Testis (tissue), 5 donors: ENCODE measurements at regions of chr3 and their contacts with region 1.

Region 1: GRCh38 chr3:13091898-13092611 is 18.8 kb upstream of the IQSEC1 start:
- DNase-seq: peak; percentile 97
- H3K4me3 ChIP-seq: no peak overlapping the region
- H3K27ac ChIP-seq: peak overlapping the region; percentile 32 to 68
- H3K4me1 ChIP-seq: peaks cover 38% of the 10 kb centered on the region
- H3K27me3 ChIP-seq: no peaks in the 10 kb centered on the region
- CTCF ChIP-seq: peak; percentile 97 to 98 (median 98)
- POLR2A ChIP-seq: no peak

Region 2: GRCh38 chr3:13648060-13649001 is 556.3 kb after region 1 on chr3:
- intact Hi-C with region 1: loop called (anchors 5 kb)
- DNase-seq: peak; percentile 93
- H3K4me3 ChIP-seq: no peak overlapping the region
- H3K27ac ChIP-seq: no peak overlapping the region
- H3K4me1 ChIP-seq: peaks cover 21% of the 10 kb centered on the region
- H3K27me3 ChIP-seq: no peaks in the 10 kb centered on the region
- CTCF ChIP-seq: peak; percentile 98
- POLR2A ChIP-seq: no peak

Region 3: GRCh38 chr3:14426063-14426620 is 1334.1 kb after region 1 on chr3:
- intact Hi-C with region 1: loop called (anchors 10 kb)
- DNase-seq: no peak
- H3K4me3 ChIP-seq: no peak overlapping the region
- H3K27ac ChIP-seq: no peak overlapping the region
- H3K4me1 ChIP-seq: no peaks in the 10 kb centered on the region
- H3K27me3 ChIP-seq: no peaks in the 10 kb centered on the region
- CTCF ChIP-seq: no peak
- POLR2A ChIP-seq: no peak